ENCODE measurements at regions of chr2 and their contacts with region 1.

Region 1: GRCh38 chr2:36663851-36664695 is 32.4 kb upstream of the VIT start:
- H3K4me3 ChIP-seq: no peak overlapping the region
- H3K27ac ChIP-seq: no peak overlapping the region
- H3K4me1 ChIP-seq: no peaks in the 10 kb centered on the region
- CTCF ChIP-seq: peak; percentile 59; the same call in 1 of the 2 replicates

Region 2: DNA sequence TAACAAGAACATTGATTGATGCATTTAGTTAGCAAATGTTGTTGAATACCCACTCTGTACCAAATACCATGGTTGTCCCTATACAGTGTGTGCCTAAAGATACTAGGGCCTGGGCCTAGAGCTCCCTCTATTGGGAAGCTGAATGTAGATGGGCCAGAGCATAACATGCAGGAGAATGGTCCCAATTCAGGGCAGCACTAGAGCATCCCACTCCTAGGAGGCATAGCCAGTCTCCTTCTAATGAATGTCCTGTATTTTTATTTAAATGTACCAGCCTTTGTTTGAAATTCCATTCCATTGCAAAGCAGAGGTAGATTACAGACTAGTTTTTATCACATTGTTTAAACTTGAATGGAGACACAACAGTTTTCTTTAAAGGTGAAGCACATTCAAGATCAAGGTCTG is 156.7 kb before region 1 on chr2:
- CTCF ChIA-PET with region 1: interaction called, 10 read pairs
- POLR2A ChIA-PET with region 1: no interaction called
- H3K4me3 ChIP-seq: no peak overlapping the region
- H3K27ac ChIP-seq: no peak overlapping the region
- H3K4me1 ChIP-seq: no peaks in the 10 kb centered on the region
- CTCF ChIP-seq: peak; percentile 45; the same call in 1 of the 2 replicates